Gastrocnemius medialis (tissue), 4 donors: ENCODE measurements at regions of chr2 and their contacts with region 1.

Region 1: DNA sequence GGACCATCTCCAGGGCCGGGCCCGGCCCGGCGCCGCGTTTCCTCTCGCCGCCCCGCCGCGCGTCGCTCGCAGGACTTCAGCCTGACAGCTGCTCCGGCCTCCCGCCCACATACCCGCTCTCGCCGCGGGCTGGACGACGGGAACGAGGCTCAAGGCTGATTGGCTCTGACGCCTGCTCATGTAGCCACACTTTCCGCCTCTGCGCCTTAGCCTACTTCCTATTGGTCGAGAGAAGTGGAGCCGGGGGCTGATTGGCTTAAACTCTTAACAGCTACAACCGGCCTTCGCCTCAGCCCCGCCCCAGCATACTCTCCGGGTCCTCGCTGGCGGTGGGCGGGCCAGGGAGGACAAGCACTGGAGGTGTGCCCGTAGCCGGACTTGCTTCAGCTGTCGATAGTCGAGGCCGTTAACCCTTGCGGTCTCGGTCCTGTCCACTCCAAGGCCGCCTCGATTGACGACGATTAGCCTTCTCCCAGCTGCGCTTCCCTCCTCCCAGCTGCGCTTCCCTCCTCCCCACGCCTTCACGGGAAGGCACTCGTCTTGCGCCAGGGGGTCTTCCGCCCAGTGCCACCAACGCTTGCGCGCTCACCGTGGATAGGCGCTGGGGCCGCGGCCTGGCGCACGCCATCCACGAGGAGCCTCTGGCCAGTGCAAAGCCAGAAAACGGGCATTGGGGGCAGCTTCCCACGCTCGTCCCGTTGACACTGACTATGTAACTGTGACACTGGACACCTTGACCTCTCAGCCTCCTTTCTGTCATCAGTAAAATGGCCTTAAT is at the start of gene PRADC1:
- DNase-seq: peak; percentile 100
- ATAC-seq: peak; percentile 90 to 93
- H3K4me3 ChIP-seq: peak within 1 kb of the TSS; percentile 67 to 100 (median 95)
- H3K27ac ChIP-seq: peak within 1 kb of the TSS; percentile 90 to 100 (median 95)
- H3K4me1 ChIP-seq: peaks cover 17 to 35% of the 10 kb centered on the region in 2 donors
- H3K27me3 ChIP-seq: no peaks in the 10 kb centered on the region
- CTCF ChIP-seq: no peak
- POLR2A ChIP-seq: peak; percentile 85 to 87
- total RNA-seq, gene PRADC1: 69.4 to 132 (median 104) TPM

Region 2: DNA sequence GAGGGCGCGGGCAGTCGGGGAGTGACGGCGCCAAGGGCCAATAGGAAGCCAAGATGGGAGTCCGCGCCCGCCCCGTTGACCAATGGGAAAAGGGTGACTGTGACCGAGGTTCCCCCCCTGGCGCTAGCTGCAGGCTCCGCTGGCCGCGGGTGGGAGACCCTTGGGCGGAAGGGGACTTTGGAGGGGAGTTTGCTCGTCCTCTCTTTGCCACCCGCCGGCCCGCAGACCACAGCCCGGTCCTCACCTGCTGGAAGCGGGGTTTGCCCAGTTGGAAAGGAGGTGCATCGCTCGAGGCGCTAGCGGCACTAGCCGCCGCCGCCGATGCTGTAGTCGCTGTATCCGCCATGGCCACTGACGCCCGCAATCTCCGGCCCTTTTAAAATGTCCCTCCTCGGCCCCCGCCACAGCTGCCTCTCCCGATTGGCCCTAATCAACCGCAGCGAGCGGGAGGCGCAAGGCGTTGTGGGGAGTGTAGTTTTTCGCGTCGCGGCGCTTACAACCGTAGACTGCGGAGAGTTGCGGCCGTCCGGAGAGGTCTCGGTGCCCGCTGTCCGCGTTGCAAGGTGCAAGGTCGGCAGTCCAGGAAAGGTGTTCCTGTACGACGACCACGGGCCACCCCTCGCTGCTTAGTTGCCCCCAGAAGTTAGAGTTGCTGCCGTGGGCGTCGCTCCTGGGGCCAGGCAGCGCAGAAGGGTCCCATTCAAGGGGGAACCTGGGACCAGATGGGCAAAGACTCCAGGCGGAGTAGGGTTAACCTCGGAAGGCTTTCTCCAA is 161.8 kb before region 1 on chr2 and contains the start of gene SFXN5:
- in situ Hi-C with region 1: no loop called
- intact Hi-C with region 1: loop called (anchors 5 kb)
- DNase-seq: peak; percentile 98
- ATAC-seq: peak; percentile 84 to 90
- H3K4me3 ChIP-seq: peak within 1 kb of the TSS; percentile 83 to 93 (median 92)
- H3K27ac ChIP-seq: peak within 1 kb of the TSS; percentile 87 to 97 (median 92)
- H3K4me1 ChIP-seq: peaks cover 19 to 48% of the 10 kb centered on the region in 2 donors
- H3K27me3 ChIP-seq: no peaks in the 10 kb centered on the region
- CTCF ChIP-seq: peak in 2 of 5 experiments; percentile 32 to 35
- POLR2A ChIP-seq: peak; percentile 24 to 59
- total RNA-seq, gene SFXN5: 6.8 to 22.7 (median 9.1) TPM

Region 3: DNA sequence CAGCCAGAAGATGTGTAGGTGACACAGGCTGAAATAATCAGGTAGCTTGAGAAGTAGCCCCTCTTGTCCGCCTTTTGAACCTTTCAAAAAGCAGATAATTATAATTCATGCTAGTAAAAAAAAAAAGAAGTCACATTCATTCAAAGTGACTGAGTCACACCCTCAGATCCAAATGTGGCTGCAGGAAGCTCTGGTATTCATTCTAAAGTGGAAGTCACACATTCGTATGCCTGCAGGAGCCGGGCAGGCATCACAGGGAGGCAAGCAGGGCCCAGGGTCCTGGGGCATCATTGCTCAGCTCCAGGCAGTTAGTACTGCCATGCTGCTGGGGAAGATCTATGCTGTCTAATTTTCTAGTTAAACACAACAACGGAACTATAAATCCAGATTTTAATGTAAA is 98.9 kb before region 1 on chr2:
- in situ Hi-C with region 1: no loop called
- intact Hi-C with region 1: no loop called
- DNase-seq: no peak
- ATAC-seq: no peak
- H3K4me3 ChIP-seq: no peak overlapping the region
- H3K27ac ChIP-seq: no peak overlapping the region
- H3K4me1 ChIP-seq: no peaks in the 10 kb centered on the region
- H3K27me3 ChIP-seq: no peaks in the 10 kb centered on the region
- CTCF ChIP-seq: no peak
- POLR2A ChIP-seq: no peak

Region 4: GRCh38 chr2:73212448-73213176 is 20.7 kb before region 1 on chr2:
- in situ Hi-C with region 1: no loop called
- intact Hi-C with region 1: loop called (anchors 1 kb)
- DNase-seq: peak; percentile 32 to 56
- ATAC-seq: peak; percentile 38 to 48
- H3K4me3 ChIP-seq: no peak overlapping the region
- H3K27ac ChIP-seq: peak overlapping the region in 1 of 4 donors; percentile 58
- H3K4me1 ChIP-seq: peaks cover 9 to 12% of the 10 kb centered on the region in 2 donors
- H3K27me3 ChIP-seq: no peaks in the 10 kb centered on the region
- CTCF ChIP-seq: peak; percentile 57 to 88 (median 78)
- POLR2A ChIP-seq: no peak

Region 5: GRCh38 chr2:73385595-73386341 is 152.4 kb after region 1 on chr2 and contains the start of gene ALMS1:
- in situ Hi-C with region 1: loop called in 1 of 4 experiments (anchors 25 kb)
- intact Hi-C with region 1: loop called (anchors 2 kb)
- DNase-seq: peak; percentile 68 to 84
- ATAC-seq: peak; percentile 91
- H3K4me3 ChIP-seq: peak within 1 kb of the TSS; percentile 81 to 97 (median 92)
- H3K27ac ChIP-seq: peak within 1 kb of the TSS; percentile 88 to 96 (median 91)
- H3K4me1 ChIP-seq: peaks cover 12 to 23% of the 10 kb centered on the region in 2 donors
- H3K27me3 ChIP-seq: no peaks in the 10 kb centered on the region
- CTCF ChIP-seq: peak in 3 of 5 experiments; percentile 13 to 53 (median 33)
- POLR2A ChIP-seq: peak in 1 of 2 donors; percentile 26
- total RNA-seq, gene ALMS1: 10.0 to 18.1 (median 13.9) TPM

Region 6: GRCh38 chr2:74529357-74530238 is 1296.3 kb after region 1 on chr2 and contains the starts of genes AUP1 and HTRA2:
- in situ Hi-C with region 1: loop called in 1 of 4 experiments (anchors 25 kb)
- intact Hi-C with region 1: no loop called
- DNase-seq: peak; percentile 98
- ATAC-seq: peak; percentile 91 to 94
- H3K4me3 ChIP-seq: peak within 1 kb of the TSS; percentile 80 to 100 (median 93)
- H3K27ac ChIP-seq: peak within 1 kb of the TSS; percentile 84 to 94 (median 89)
- H3K4me1 ChIP-seq: peaks cover 19 to 28% of the 10 kb centered on the region in 2 donors
- H3K27me3 ChIP-seq: no peaks in the 10 kb centered on the region
- CTCF ChIP-seq: no peak
- POLR2A ChIP-seq: peak; percentile 70 to 89
- total RNA-seq, gene AUP1: 112 to 148 (median 115) TPM
- total RNA-seq, gene HTRA2: 24.2 to 38.5 (median 29.4) TPM